ENCODE measurements at regions of chr12 and their contacts with region 1.

Region 1: GRCh38 chr12:64544371-64545080 is 65.8 kb upstream of the RASSF3 start:
- DNase-seq: no peak
- H3K4me3 Mint-ChIP-seq: no peak overlapping the region
- H3K27ac Mint-ChIP-seq: no peak overlapping the region
- H3K4me1 Mint-ChIP-seq: peaks cover 3% of the 10 kb centered on the region
- H3K27me3 Mint-ChIP-seq: peaks cover 13% of the 10 kb centered on the region

Region 2: DNA sequence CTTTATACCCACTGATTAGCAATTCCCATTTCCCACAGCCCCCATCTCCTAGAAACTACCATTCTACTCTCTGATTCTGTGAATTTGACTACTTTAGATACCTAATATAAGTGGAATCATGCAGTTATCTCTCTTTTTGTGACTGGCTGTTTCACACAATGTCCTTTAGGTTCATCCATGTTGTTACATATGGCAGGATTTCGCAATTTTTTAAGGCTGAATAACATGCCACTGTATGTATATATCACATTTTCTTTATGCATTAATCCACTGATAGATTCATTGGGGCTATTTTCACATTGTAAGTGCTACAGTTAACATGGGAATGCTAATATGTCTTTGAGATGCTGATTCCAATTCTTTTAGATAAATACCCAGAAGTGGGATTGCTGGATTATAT is 104.4 kb before region 1 on chr12:
- intact Hi-C with region 1: no loop called
- DNase-seq: no peak
- H3K4me3 Mint-ChIP-seq: no peak overlapping the region
- H3K27ac Mint-ChIP-seq: no peak overlapping the region
- H3K4me1 Mint-ChIP-seq: peaks cover 7% of the 10 kb centered on the region
- H3K27me3 Mint-ChIP-seq: no peaks in the 10 kb centered on the region

Region 3: DNA sequence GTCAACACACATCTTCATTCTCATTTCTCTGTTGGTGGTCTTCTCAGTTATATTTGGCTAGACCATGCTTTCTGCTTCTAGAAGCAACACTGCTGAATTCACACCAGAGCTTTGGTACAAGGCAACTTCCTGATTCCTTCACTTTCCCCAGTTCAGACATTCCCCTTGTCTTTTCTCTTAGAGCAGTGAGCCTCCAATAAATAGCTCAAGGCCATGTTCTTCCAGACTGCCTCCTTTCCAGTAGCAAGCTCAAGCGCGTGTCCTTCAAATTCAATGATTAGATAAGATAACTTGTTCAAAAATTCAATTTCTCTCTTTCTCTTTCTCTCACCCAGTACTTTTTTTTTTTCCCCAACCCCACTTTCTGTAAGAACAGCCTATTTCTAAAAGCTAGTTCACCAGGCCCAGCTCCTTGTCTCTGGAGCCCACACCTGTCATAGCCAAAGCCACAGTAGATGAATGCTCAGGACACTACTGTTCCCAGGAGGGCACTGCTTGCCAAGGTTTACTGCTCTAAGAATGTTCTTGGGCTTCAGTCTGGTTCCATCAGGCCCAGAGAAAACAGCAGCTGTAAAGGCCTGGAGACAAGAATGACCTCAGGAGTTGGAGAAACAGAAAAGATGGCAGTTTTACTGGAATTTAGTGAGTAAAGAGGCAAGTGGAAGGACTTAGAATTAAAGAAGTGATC is 74.9 kb before region 1 on chr12:
- intact Hi-C with region 1: no loop called
- DNase-seq: no peak
- H3K4me3 Mint-ChIP-seq: no peak overlapping the region
- H3K27ac Mint-ChIP-seq: no peak overlapping the region
- H3K4me1 Mint-ChIP-seq: peaks cover 7% of the 10 kb centered on the region
- H3K27me3 Mint-ChIP-seq: no peaks in the 10 kb centered on the region

Region 4: GRCh38 chr12:64506955-64507354 is 37.6 kb before region 1 on chr12:
- intact Hi-C with region 1: loop called (anchors 1 kb)
- DNase-seq: no peak
- H3K4me3 Mint-ChIP-seq: no peak overlapping the region
- H3K27ac Mint-ChIP-seq: no peak overlapping the region
- H3K4me1 Mint-ChIP-seq: peaks cover 5% of the 10 kb centered on the region
- H3K27me3 Mint-ChIP-seq: peaks cover 4% of the 10 kb centered on the region

Region 5: DNA sequence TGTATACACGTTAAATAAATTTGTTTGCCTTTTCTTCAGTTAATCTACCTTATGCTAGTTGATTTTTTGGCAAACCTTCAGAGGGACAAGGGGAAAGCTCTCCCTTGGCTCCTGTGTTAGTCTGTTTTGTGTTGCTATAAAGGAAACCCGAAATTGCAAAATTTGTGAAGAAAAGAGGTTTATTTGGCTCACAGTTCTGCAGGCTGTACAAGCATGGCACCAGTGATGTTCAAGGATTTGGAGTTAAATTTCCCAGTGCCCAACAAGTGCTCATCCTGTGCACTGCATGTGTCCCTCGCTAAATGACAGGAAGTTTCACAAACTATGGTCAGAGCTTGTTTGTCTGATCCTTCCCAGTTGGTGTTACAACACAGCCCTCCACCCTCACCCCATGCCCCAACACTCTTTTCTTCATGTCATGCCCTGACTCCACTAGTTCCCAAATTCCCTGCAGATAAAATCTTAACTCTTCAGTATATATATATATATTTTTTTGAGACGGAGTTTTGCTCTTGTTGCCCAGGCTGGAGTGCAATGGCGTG is 51.8 kb after region 1 on chr12:
- intact Hi-C with region 1: no loop called
- DNase-seq: no peak
- H3K4me3 Mint-ChIP-seq: no peak overlapping the region
- H3K27ac Mint-ChIP-seq: no peak overlapping the region
- H3K4me1 Mint-ChIP-seq: peaks cover 20% of the 10 kb centered on the region
- H3K27me3 Mint-ChIP-seq: peaks cover 16% of the 10 kb centered on the region

Region 6: GRCh38 chr12:64696080-64696741 is 151.7 kb after region 1 on chr12:
- intact Hi-C with region 1: loop called (anchors 1 kb)
- DNase-seq: no peak
- H3K4me3 Mint-ChIP-seq: no peak overlapping the region
- H3K27ac Mint-ChIP-seq: no peak overlapping the region
- H3K4me1 Mint-ChIP-seq: peaks cover 73% of the 10 kb centered on the region
- H3K27me3 Mint-ChIP-seq: no peaks in the 10 kb centered on the region

Region 7: GRCh38 chr12:64780531-64781279 is 236.2 kb after region 1 on chr12:
- intact Hi-C with region 1: loop called (anchors 5 kb)
- DNase-seq: no peak
- H3K4me3 Mint-ChIP-seq: peak overlapping the region; percentile 75
- H3K27ac Mint-ChIP-seq: no peak overlapping the region
- H3K4me1 Mint-ChIP-seq: peaks cover 9% of the 10 kb centered on the region
- H3K27me3 Mint-ChIP-seq: peaks cover 76% of the 10 kb centered on the region

Region 8: DNA sequence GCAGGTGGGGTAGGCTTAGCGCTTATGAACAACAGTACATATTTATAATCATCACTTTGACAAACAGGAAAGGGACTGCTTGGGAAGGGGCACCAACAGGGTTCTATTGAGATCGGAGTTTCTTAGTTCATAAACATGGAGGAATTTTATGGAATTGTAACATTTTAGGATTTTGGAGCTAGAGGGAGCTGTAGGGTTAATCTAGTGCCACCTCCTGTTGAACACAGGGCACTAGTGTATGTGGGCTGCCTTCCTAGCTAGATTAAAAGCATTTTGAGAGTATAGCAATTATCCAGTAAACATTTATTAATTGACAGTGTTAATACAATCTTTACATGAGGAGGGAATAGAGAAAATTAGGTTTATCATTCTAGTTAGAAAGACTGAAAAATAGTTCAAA is 256.9 kb after region 1 on chr12:
- intact Hi-C with region 1: loop called (anchors 1 kb)
- DNase-seq: no peak
- H3K4me3 Mint-ChIP-seq: no peak overlapping the region
- H3K27ac Mint-ChIP-seq: no peak overlapping the region
- H3K4me1 Mint-ChIP-seq: no peaks in the 10 kb centered on the region
- H3K27me3 Mint-ChIP-seq: peaks cover 32% of the 10 kb centered on the region

Measured in activated T-helper 1 cell treated with anti-CD3 and anti-CD28 coated beads, Interleukin-12 subunit alpha, Interleukin-12 subunit beta, Interleukin-2, Interleukin-4 antibody, amounts not matched to agents 30 ng/mL and 10 ng/mL and 1 ng/mL, durations not matched to agents 14 hours and 24 hours and 36 hours (primary cell).